CD4-positive, alpha-beta T cell (primary cell): ENCODE measurements at regions of chr12 and their contacts with region 1.

Region 1: DNA sequence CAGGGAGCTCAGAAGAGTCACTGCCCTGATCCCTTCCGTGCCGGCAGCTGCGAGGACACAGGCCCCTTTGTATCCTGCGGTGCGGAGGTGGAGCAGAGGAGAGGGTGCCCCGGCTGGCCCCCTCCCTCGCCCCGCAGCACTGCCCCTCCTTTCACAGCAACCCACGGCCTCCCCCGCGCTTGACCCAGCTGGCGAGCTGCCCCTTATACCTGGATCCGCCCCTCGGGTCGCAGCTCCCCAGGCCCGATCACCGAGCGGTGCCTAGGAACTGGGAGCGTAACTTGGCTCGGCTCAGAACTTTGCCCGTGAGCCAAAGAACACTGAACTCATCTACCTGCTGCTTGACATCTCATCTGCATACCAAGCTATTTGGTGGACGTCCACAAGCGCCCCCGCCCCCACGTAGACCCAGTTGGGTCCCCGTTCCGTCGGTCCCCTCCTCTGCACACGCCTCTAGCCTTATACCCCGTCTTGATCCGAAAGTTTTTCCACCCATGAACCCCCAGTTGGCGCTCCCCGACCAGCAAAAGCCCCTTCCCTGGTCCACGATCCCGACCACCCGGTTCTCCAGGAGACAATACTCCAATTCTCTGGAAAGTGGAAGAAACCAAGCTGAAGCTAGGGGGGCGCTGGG is 697 bp upstream of the DNAJC14 start:
- DNase-seq: peak in 11 of 14 experiments; percentile 4 to 54 (median 21)
- ATAC-seq: peak; percentile 23
- H3K4me3 ChIP-seq: peak overlapping the region; percentile 98
- H3K4me3 Mint-ChIP-seq: peak overlapping the region; percentile 100
- H3K27ac ChIP-seq: peak overlapping the region; percentile 52 to 70
- H3K27ac Mint-ChIP-seq: peak overlapping the region; percentile 88
- H3K4me1 ChIP-seq: peaks cover 58% of the 10 kb centered on the region
- H3K4me1 Mint-ChIP-seq: peaks cover 61% of the 10 kb centered on the region
- H3K27me3 ChIP-seq: no peaks in the 10 kb centered on the region
- H3K27me3 Mint-ChIP-seq: no peaks in the 10 kb centered on the region
- CTCF ChIP-seq: no peak

Region 2: DNA sequence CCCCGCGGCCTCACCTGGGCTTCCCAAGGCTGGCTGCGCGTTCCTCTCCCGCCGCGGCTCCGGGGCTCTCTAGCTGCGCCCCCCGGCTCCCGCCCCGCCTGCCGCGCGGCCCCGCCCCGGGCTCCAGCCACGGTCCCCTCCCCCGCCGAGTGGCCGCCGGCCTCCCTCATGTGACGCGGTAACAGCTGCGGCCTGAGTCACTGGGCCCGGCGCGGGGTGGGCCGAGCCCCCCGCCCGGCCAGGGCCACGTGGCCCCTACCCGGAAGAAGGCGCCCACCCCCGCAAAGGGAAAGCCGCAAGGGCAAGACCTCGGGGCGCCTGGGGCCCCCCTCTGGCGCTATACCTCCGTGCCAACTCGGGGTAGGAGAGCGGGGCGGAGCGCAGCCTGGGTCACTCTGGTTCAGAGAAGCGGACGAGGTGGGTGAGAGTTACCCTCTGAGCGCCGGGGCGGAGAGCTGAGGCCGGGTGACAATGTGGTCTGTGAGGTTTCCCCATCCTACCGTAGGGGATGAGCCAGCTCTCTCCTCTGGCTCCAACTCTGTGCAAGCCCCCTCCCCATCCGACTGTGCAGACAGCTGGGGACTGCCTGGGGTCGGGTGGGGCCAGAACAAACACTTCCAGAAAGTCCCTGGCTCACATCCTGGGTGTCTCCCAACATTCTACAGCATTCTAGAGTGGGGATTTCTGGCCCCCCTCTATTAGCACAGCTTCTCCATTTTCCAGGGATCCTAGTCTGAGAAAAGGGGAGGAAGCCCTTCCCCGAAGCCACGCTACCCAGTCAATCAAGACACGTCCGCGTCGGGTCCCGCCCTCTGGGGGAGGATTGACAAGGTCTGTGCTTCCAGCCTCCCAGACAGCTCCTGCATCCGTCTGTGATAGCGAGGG is 100.9 kb before region 1 on chr12 and contains the start of gene CD63:
- CTCF ChIA-PET with region 1: no interaction called
- POLR2A ChIA-PET with region 1: interaction called, 10 read pairs
- intact Hi-C with region 1: no loop called
- DNase-seq: peak in 11 of 14 experiments; percentile 33 to 78 (median 52)
- ATAC-seq: peak; percentile 61
- H3K4me3 ChIP-seq: peak within 1 kb of the TSS; percentile 86
- H3K4me3 Mint-ChIP-seq: peak within 1 kb of the TSS; percentile 88
- H3K27ac ChIP-seq: peak within 1 kb of the TSS; percentile 57 to 80
- H3K27ac Mint-ChIP-seq: peak within 1 kb of the TSS; percentile 81
- H3K4me1 ChIP-seq: peaks cover 43% of the 10 kb centered on the region
- H3K4me1 Mint-ChIP-seq: peaks cover 48% of the 10 kb centered on the region
- H3K27me3 ChIP-seq: no peaks in the 10 kb centered on the region
- H3K27me3 Mint-ChIP-seq: no peaks in the 10 kb centered on the region
- CTCF ChIP-seq: no peak
- total RNA-seq, gene CD63: 34.0 to 36.4 TPM

Region 3: GRCh38 chr12:55847603-55848291 is 17.7 kb after region 1 on chr12:
- CTCF ChIA-PET with region 1: no interaction called
- POLR2A ChIA-PET with region 1: no interaction called
- intact Hi-C with region 1: no loop called
- DNase-seq: peak in 3 of 14 experiments; percentile 9 to 65 (median 58)
- ATAC-seq: no peak
- H3K4me3 ChIP-seq: no peak overlapping the region
- H3K4me3 Mint-ChIP-seq: no peak overlapping the region
- H3K27ac ChIP-seq: no peak overlapping the region
- H3K27ac Mint-ChIP-seq: no peak overlapping the region
- H3K4me1 ChIP-seq: peaks cover 3% of the 10 kb centered on the region
- H3K4me1 Mint-ChIP-seq: no peaks in the 10 kb centered on the region
- H3K27me3 ChIP-seq: peaks cover 0 to 2% of the 10 kb centered on the region in 2 experiments
- H3K27me3 Mint-ChIP-seq: peaks cover 3% of the 10 kb centered on the region
- CTCF ChIP-seq: no peak

Region 4: DNA sequence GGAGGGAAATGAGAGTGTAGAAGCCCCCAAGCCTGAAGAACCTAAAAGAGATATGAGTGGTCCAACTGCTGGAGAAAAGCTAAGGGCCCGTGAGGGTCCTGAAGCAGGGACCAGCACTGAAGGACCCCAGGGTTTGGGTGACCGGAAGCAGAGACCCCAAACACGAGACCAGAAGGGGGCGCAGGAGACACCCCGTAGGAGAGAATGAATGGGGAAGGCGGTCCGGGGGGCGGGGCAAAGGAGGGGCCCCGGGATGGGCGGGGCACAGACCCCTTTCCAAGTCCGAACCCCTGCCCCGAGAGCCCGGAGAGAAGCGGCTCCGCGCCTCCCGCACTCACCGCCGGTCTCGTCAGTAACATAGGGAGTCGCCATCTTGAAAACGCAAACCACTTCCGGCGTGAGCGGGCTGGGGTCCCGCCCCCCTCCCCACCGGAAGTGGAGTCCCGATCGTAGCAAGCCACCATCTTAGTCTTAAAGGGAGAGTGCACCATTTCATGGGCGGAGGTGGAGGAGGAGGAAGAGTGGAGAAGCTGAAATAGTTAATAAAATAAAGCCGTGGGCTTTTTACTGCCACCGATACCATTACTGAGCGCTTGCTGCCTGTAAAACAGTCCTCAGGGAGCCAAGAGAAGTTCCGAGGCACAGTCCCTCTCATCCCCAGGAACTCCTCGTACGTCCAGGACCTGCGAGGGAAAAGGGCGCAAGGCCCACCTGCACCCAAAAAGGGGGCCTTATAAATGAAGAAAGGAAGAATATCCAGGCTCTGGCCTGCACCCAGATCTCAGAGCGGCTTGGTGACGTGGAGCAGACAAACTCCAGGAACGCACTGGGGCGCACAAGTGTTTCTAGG is 96.9 kb after region 1 on chr12:
- CTCF ChIA-PET with region 1: interaction called, 12 read pairs
- POLR2A ChIA-PET with region 1: interaction called, 159 read pairs
- intact Hi-C with region 1: loop called (anchors 1 to 2 kb)
- DNase-seq: peak; percentile 83 to 96 (median 88)
- ATAC-seq: peak; percentile 32
- H3K4me3 ChIP-seq: peak overlapping the region; percentile 98
- H3K4me3 Mint-ChIP-seq: peak overlapping the region; percentile 96
- H3K27ac ChIP-seq: peak overlapping the region; percentile 72 to 93
- H3K27ac Mint-ChIP-seq: peak overlapping the region; percentile 97
- H3K4me1 ChIP-seq: peaks cover 45% of the 10 kb centered on the region
- H3K4me1 Mint-ChIP-seq: peaks cover 56% of the 10 kb centered on the region
- H3K27me3 ChIP-seq: no peaks in the 10 kb centered on the region
- H3K27me3 Mint-ChIP-seq: no peaks in the 10 kb centered on the region
- CTCF ChIP-seq: peak; percentile 86

Region 5: DNA sequence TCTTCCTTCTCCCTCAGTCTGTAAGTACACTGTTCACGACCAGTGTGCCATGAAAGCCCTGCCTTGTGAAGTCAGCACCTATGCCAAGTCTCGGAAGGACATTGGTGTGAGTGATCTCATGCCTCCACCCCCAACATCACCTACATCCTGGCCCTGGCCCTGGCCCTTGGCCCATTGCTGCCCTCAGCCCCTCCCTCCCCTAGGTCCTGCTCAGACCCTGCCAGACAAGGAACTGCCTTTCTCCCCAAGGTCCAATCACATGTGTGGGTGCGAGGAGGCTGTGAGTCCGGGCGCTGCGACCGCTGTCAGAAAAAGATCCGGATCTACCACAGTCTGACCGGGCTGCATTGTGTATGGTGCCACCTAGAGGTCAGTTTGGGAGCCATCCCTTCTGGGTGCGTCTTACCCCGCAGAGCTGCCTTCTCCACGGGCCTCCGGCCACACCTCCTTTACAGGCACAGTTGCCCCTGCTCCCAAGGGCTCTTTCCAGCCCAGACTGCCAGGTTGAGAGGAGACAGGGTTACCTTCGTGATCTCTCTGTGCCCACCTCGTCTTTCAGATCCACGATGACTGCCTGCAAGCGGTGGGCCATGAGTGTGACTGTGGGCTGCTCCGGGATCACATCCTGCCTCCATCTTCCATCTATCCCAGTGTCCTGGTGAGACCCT is 110.1 kb after region 1 on chr12:
- CTCF ChIA-PET with region 1: interaction called, 13 read pairs
- POLR2A ChIA-PET with region 1: interaction called, 24 read pairs
- intact Hi-C with region 1: no loop called
- DNase-seq: peak; percentile 76 to 92 (median 82)
- ATAC-seq: peak; percentile 88
- H3K4me3 ChIP-seq: no peak overlapping the region
- H3K4me3 Mint-ChIP-seq: peak overlapping the region; percentile 72
- H3K27ac ChIP-seq: peak overlapping the region; percentile 42 to 70
- H3K27ac Mint-ChIP-seq: peak overlapping the region; percentile 97
- H3K4me1 ChIP-seq: peaks cover 78% of the 10 kb centered on the region
- H3K4me1 Mint-ChIP-seq: peaks cover 79% of the 10 kb centered on the region
- H3K27me3 ChIP-seq: no peaks in the 10 kb centered on the region
- H3K27me3 Mint-ChIP-seq: no peaks in the 10 kb centered on the region
- CTCF ChIP-seq: peak; percentile 92

Region 6: DNA sequence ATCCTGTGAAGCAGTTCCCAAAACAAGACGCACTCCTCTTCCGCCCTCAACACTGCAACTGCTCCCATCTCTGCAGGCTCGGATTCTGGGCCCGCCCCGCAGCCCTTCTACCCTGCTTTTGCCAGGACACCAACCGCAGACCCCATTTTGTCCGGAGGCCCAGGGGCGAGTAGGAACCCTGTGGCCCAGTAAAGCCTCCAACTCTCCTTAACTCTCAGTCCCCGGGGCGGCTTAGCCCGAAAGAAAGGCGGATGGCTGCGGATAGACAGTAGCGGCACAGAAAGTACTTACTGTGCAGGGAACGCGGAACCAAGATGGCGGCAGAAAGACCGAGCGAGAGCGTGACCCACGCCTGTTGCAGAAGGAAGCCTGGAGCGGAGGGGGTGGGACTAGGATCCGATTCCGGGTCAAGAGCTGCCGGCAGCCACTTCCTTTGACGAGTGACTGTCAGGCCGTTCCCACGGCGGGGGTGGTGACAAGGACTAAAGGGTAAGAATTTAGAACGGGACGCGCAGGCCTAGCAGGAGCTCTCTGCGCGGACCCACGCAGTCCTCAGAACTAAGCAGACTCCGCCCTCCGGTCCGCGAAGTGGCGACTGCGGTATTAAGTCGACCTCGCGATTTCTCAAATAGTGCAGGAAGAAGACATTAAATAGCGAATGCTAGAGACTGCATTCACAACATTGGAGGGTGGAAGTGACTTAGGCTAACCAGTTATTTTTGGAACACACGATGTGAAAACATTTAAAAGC is 895.1 kb after region 1 on chr12 and contains the start of gene NACA:
- CTCF ChIA-PET with region 1: no interaction called
- POLR2A ChIA-PET with region 1: no interaction called
- intact Hi-C with region 1: loop called in 1 of 2 experiments (anchors 10 kb)
- DNase-seq: peak; percentile 94 to 99 (median 96)
- ATAC-seq: peak; percentile 93
- H3K4me3 ChIP-seq: peak within 1 kb of the TSS; percentile 97
- H3K4me3 Mint-ChIP-seq: peak within 1 kb of the TSS; percentile 98
- H3K27ac ChIP-seq: peak within 1 kb of the TSS; percentile 86 to 91
- H3K27ac Mint-ChIP-seq: peak within 1 kb of the TSS; percentile 92
- H3K4me1 ChIP-seq: peaks cover 49% of the 10 kb centered on the region
- H3K4me1 Mint-ChIP-seq: peaks cover 60% of the 10 kb centered on the region
- H3K27me3 ChIP-seq: no peaks in the 10 kb centered on the region
- H3K27me3 Mint-ChIP-seq: no peaks in the 10 kb centered on the region
- CTCF ChIP-seq: no peak
- total RNA-seq, gene NACA: 1,441 to 1,479 TPM